Calu3 (cell line): ENCODE measurements at regions of chr1 and their contacts with region 1.

Region 1: GRCh38 chr1:75632350-75632949 is 21.5 kb upstream of the SLC44A5 start:
- DNase-seq: peak; percentile 36
- H3K4me3 Mint-ChIP-seq: no peak overlapping the region
- H3K27ac Mint-ChIP-seq: no peak overlapping the region
- H3K4me1 Mint-ChIP-seq: no peaks in the 10 kb centered on the region
- H3K27me3 Mint-ChIP-seq: no peaks in the 10 kb centered on the region
- CTCF ChIP-seq: peak; percentile 62

Region 2: GRCh38 chr1:75233302-75233929 is 399.0 kb before region 1 on chr1:
- CTCF ChIA-PET with region 1: no interaction called
- intact Hi-C with region 1: loop called (anchors 1 kb)
- DNase-seq: peak; percentile 6
- H3K4me3 Mint-ChIP-seq: no peak overlapping the region
- H3K27ac Mint-ChIP-seq: no peak overlapping the region
- H3K4me1 Mint-ChIP-seq: no peaks in the 10 kb centered on the region
- H3K27me3 Mint-ChIP-seq: no peaks in the 10 kb centered on the region
- CTCF ChIP-seq: peak; percentile 45

Region 3: DNA sequence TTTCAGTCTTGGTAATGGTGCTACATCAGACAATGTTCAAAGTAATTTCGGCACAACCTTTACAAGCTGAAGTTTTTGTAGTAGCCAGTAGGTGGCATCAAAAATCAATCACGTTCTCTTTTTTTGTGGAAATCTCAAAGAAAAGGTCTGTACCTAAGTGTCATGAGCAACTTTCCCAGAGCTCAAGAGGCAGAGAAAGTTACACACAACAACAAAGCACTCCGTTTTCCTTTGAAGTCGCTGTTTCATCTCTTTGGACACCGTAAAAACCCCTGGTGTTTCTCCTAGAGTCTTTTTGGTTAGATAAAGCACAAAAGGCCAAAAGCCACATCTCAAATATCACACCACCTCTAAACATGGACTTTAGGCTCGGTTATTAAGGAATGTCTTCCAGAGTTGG is 366.7 kb before region 1 on chr1:
- CTCF ChIA-PET with region 1: interaction called, 7 read pairs
- intact Hi-C with region 1: loop called (anchors 1 kb)
- DNase-seq: peak; percentile 22
- H3K4me3 Mint-ChIP-seq: no peak overlapping the region
- H3K27ac Mint-ChIP-seq: no peak overlapping the region
- H3K4me1 Mint-ChIP-seq: no peaks in the 10 kb centered on the region
- H3K27me3 Mint-ChIP-seq: no peaks in the 10 kb centered on the region
- CTCF ChIP-seq: no peak